RWPE1 (cell line): ENCODE measurements at regions of chr12 and their contacts with region 1.

Region 1: GRCh38 chr12:8996682-8997360 is 7.5 kb downstream of the KLRG1 start:
- DNase-seq: no peak
- H3K27ac ChIP-seq: no peak overlapping the region
- CTCF ChIP-seq: no peak

Region 2: DNA sequence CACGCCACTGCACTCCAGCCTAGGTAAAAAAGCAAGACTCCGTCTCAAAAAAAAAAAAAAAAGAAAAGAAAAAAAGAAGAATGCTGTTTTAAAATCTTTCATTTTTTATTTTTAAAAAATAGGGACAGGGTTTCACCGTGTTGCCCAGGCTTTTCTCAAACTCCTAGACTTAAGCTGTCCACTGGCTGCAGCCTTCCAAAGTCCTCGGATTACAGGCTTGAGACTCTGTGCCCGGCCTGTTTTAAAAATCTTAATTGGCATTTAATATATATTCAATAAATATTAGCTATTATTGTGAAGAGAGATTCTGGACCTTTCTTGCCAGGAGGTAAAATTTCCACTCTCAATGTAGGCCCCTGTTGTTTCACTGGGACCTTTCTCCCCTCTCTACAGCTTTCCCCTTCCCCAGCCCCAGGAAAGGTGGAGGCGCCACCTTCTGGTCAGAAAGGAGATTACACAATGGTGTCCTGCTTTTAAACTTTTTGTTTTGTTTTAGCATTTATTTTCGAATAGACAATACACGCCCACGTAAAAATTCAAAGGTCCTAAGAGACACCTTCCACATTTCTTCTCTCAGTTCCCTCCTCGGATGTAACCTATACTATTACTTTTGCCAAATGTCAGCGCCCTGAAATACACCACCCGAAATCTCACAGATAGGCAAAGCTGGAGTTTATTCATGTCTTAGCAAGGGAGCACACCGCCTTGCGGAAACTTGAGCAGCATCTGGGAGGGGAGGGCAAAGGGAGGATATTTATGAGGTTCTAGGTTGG is 106.3 kb before region 1 on chr12:
- CTCF ChIA-PET with region 1: no interaction called
- POLR2A ChIA-PET with region 1: no interaction called
- DNase-seq: peak; percentile 61
- H3K27ac ChIP-seq: no peak overlapping the region
- CTCF ChIP-seq: peak; percentile 66

Region 3: GRCh38 chr12:9227950-9228349 is 231.1 kb after region 1 on chr12:
- CTCF ChIA-PET with region 1: interaction called, 10 read pairs
- POLR2A ChIA-PET with region 1: no interaction called
- DNase-seq: no peak
- H3K27ac ChIP-seq: no peak overlapping the region
- CTCF ChIP-seq: no peak